ENCODE measurements at regions of chr17 and their contacts with region 1.

Region 1: DNA sequence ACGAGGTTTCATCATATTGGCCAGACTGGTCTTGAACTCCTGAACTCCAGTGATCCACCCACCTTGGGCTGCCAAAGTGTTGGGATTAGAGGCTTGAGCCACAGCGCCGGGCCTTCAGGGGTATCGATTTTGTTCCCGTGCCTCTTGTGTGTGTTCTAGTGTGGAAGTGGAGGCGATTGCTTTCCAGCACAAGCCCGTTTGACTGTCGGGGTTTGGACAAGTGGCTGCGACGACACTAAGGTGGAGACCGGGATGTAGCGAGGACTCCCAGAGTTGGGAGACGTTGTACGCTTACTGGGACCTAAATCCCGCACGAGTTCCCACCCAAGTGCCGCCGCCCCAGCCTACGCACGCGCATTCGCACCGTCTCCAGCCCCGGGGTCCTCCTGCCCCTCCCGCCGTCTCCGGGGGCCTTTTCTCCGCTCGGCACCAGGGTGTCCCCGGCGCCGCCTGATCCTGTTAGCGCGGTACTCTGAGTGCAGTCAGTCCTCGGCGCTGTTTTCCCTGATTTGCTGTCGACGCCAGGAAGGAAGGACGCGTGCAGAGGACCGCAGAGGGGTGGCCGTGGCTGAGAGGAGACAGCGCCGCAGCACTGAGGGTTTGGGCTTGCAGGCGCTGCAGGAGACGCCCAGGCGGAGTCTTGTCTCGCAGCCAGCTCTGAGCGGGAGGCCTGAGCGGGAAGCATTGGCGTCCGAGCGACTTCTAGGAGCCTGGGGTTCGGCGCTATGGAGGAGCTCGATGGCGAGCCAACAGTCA is at the start of gene NUP85:
- DNase-seq: peak; percentile 95
- ATAC-seq: peak; percentile 89
- H3K4me3 Mint-ChIP-seq: peak within 1 kb of the TSS; percentile 92
- H3K27ac Mint-ChIP-seq: peak within 1 kb of the TSS; percentile 100
- H3K4me1 Mint-ChIP-seq: peaks cover 14% of the 10 kb centered on the region
- H3K27me3 Mint-ChIP-seq: no peaks in the 10 kb centered on the region
- CTCF ChIP-seq: no peak
- total RNA-seq, gene NUP85: 89.7 to 109 TPM (median 95.1 TPM) in 3 replicates

Region 2: GRCh38 chr17:75047398-75048098 is 157.7 kb before region 1 on chr17:
- CTCF ChIA-PET with region 1: no interaction called
- POLR2A ChIA-PET with region 1: no interaction called
- DNase-seq: peak; percentile 44
- ATAC-seq: peak; percentile 1; the same call in 1 of the 2 replicates
- H3K4me3 Mint-ChIP-seq: peak overlapping the region; percentile 99
- H3K27ac Mint-ChIP-seq: peak overlapping the region; percentile 81
- H3K4me1 Mint-ChIP-seq: peaks cover 36% of the 10 kb centered on the region
- H3K27me3 Mint-ChIP-seq: no peaks in the 10 kb centered on the region
- CTCF ChIP-seq: no peak

Region 3: GRCh38 chr17:75131280-75132017 is 73.8 kb before region 1 on chr17 and contains the start of gene NT5C:
- CTCF ChIA-PET with region 1: interaction called, 17 read pairs
- POLR2A ChIA-PET with region 1: no interaction called
- DNase-seq: peak; percentile 87
- ATAC-seq: peak; percentile 75
- H3K4me3 Mint-ChIP-seq: peak within 1 kb of the TSS; percentile 84
- H3K27ac Mint-ChIP-seq: peak within 1 kb of the TSS; percentile 93
- H3K4me1 Mint-ChIP-seq: peaks cover 20% of the 10 kb centered on the region
- H3K27me3 Mint-ChIP-seq: no peaks in the 10 kb centered on the region
- CTCF ChIP-seq: peak; percentile 59
- total RNA-seq, gene NT5C: 91.0 to 102 TPM (median 96.9 TPM) in 3 replicates

Region 4: GRCh38 chr17:75191584-75191983 is 13.6 kb before region 1 on chr17:
- CTCF ChIA-PET with region 1: interaction called, 23 read pairs
- POLR2A ChIA-PET with region 1: interaction called, 3 read pairs
- DNase-seq: no peak
- ATAC-seq: no peak
- H3K4me3 Mint-ChIP-seq: no peak overlapping the region
- H3K27ac Mint-ChIP-seq: peak overlapping the region; percentile 27; the same call in 1 of the 2 replicates
- H3K4me1 Mint-ChIP-seq: no peaks in the 10 kb centered on the region
- H3K27me3 Mint-ChIP-seq: no peaks in the 10 kb centered on the region; the same call in 1 of the 2 replicates
- CTCF ChIP-seq: no peak

Region 5: DNA sequence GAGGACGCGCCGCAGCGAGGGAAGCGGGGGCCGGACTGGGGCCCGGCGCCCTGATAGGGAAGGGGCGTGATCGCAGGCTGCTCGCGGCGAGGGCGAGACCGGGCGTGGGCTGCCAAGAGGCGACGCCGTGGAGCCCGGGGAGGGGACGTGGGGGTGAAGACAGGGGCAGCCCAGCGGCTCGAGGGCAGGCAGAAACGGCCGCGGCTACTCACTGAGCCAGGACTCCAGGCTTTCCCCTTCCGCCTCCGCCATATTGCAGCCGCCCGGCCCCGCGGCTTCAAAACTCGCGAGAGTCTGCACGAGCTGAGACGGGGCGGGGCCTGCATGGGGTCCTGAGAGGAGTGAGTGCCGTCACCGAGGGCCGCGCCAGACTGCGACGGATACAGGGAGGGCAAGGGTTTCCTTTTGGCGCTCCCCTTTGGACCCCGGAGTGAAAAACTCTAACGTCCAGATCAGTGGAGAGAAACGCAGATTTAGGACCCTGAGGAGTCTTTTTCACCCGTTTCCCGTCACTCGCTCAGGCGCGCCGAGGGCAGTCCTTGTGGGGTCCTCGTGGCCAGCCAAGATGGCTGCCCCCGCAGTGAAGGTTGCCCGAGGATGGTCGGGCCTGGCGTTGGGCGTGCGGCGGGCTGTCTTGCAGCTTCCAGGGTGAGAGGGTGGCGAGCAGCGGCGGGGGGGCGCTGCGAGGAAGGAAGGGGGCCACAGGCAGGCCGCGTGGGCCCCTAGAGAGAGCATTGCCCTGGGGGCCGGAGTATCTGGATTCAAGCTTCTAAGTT is 56.3 kb after region 1 on chr17 and contains the starts of genes GGA3 and MRPS7:
- CTCF ChIA-PET with region 1: interaction called, 15 read pairs
- POLR2A ChIA-PET with region 1: no interaction called
- DNase-seq: peak; percentile 96
- ATAC-seq: peak; percentile 96
- H3K4me3 Mint-ChIP-seq: peak within 1 kb of the TSS; percentile 98
- H3K27ac Mint-ChIP-seq: peak within 1 kb of the TSS; percentile 100
- H3K4me1 Mint-ChIP-seq: peaks cover 26% of the 10 kb centered on the region
- H3K27me3 Mint-ChIP-seq: no peaks in the 10 kb centered on the region
- CTCF ChIP-seq: no peak
- total RNA-seq, gene GGA3: 54.5 to 66.9 TPM (median 62.7 TPM) in 3 replicates
- total RNA-seq, gene MRPS7: 85.8 to 94.7 TPM (median 87.5 TPM) in 3 replicates

Region 6: GRCh38 chr17:75289115-75289831 is 84.1 kb after region 1 on chr17 and contains the start of gene SLC25A19:
- CTCF ChIA-PET with region 1: no interaction called
- POLR2A ChIA-PET with region 1: no interaction called
- DNase-seq: peak; percentile 98
- ATAC-seq: peak; percentile 98
- H3K4me3 Mint-ChIP-seq: peak within 1 kb of the TSS; percentile 94
- H3K27ac Mint-ChIP-seq: peak within 1 kb of the TSS; percentile 99
- H3K4me1 Mint-ChIP-seq: peaks cover 8% of the 10 kb centered on the region
- H3K27me3 Mint-ChIP-seq: no peaks in the 10 kb centered on the region; the same call in 1 of the 2 replicates
- CTCF ChIP-seq: no peak
- total RNA-seq, gene SLC25A19: 22.6 to 27.7 TPM (median 23.0 TPM) in 3 replicates

Region 7: DNA sequence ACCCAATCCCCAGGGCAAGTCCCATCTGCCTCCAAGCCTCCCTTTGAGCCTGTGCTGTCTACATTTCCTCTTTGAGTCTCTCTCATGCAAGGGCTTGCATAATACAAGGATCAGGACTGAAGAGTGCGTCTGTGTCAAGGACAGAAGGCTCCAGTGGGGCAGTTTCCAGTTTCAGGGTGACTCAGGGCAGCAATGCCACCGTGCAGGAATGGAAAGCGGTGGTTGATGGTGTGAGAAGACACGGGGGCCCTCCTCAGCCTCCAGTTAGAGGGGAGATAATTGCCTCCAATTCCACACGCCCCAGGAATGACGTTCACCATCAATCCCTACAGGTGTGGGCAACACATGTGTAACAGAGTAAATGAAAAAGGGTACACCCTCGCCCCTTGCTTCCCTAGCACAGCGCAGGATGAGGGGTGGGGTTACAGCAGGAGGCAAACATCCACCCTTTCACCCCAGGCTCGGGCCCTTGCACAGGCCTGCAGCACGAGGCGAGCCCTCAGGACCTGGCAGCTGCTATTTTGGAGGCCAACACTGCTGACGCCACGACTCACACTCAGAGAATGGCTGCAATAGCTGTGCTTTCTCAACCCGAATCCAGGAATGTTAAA is 108.8 kb after region 1 on chr17:
- CTCF ChIA-PET with region 1: no interaction called
- POLR2A ChIA-PET with region 1: no interaction called
- DNase-seq: no peak
- ATAC-seq: no peak
- H3K4me3 Mint-ChIP-seq: no peak overlapping the region
- H3K27ac Mint-ChIP-seq: peak overlapping the region; percentile 36; the same call in 1 of the 2 replicates
- H3K4me1 Mint-ChIP-seq: peaks cover 16% of the 10 kb centered on the region
- H3K27me3 Mint-ChIP-seq: no peaks in the 10 kb centered on the region
- CTCF ChIP-seq: no peak